ENCODE measurements at regions of chr17 and their contacts with region 1.

Region 1: DNA sequence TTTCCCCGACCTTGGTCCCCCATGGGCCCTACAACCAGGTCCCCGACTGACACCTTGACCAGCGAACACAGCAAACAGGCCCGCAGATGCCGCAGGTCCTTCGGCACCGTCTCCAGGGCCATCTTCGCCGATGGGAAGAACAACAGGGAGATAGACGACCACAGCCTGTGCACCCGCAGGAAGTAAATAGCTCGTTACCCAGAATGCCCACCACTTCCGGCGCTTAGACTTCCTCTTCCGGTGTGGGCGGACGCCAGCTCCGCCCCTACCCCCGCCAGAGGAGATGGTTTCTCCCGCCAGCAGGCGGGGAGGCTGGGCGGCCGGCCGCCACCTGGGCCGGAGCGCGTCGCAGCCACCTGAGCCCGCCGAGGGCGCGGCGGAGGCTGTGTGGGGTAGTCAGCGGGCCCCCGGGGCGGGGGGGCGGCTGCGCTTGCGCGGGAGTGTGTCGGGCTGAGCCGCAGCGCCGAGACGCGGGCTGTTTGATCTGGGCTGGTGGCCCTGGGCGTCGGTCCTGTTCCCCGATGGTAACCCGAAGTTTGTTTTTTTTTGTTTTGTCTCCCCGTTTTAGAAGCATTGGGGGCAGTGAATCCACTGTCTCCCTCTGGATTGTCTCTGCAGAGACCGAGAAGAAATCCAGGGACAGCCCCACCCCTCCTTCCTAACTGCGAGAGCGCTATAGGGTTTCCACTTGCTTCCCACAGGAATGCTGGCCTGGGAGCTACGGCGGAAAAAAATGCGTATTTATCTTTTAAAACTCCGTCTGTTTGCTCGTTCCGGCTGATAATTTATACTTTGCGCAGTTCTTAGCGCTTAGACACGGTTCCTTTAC is at the start of gene SUPT4H1:
- DNase-seq: peak; percentile 91
- H3K4me3 Mint-ChIP-seq: peak within 1 kb of the TSS; percentile 95
- H3K27ac Mint-ChIP-seq: peak within 1 kb of the TSS; percentile 92
- H3K4me1 Mint-ChIP-seq: peaks cover 58% of the 10 kb centered on the region
- H3K27me3 Mint-ChIP-seq: no peaks in the 10 kb centered on the region
- total RNA-seq, gene SUPT4H1: 66.1 to 69.0 TPM

Region 2: DNA sequence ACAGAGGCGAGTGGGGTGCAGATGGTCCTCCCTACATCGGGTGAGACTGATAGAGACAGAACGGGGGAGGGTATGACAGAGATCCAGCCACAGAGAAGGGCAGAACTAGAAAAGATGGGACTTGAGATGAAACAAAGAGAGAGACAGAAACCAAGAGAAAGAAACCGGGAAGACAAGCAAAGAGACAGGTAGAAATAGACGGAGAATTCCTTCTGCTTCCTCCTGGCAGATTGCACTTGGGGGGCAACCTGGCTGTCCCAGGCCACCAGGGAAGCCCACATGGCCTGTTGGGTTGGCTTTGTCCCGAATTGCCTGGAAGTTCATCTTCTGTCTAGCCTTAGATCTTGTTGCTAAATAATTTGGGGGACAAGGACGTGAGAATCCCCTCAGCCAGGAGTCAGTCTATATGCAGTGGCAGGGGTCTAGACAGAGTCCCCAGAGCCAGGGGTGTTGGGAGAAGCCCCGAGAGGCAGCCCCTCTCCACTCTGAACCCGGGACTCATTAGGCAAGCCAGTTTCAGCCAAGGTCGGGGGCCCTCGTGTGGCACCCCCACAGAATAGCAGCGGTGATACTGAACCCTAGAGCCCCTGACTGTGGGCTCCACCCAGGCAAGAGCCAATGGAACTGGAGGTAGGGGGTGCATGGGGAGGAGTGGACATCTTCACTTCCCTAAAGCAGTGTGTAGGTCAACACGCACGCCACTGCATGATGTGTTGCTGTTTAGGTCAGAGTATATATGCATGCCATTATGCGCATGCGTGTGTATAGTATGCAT is 23.0 kb before region 1 on chr17:
- CTCF ChIA-PET with region 1: interaction called, 11 read pairs
- POLR2A ChIA-PET with region 1: interaction called, 244 read pairs
- DNase-seq: peak; percentile 86
- H3K4me3 Mint-ChIP-seq: peak overlapping the region; percentile 93
- H3K27ac Mint-ChIP-seq: peak overlapping the region; percentile 99
- H3K4me1 Mint-ChIP-seq: peaks cover 36% of the 10 kb centered on the region
- H3K27me3 Mint-ChIP-seq: peaks cover 4% of the 10 kb centered on the region

Region 3: DNA sequence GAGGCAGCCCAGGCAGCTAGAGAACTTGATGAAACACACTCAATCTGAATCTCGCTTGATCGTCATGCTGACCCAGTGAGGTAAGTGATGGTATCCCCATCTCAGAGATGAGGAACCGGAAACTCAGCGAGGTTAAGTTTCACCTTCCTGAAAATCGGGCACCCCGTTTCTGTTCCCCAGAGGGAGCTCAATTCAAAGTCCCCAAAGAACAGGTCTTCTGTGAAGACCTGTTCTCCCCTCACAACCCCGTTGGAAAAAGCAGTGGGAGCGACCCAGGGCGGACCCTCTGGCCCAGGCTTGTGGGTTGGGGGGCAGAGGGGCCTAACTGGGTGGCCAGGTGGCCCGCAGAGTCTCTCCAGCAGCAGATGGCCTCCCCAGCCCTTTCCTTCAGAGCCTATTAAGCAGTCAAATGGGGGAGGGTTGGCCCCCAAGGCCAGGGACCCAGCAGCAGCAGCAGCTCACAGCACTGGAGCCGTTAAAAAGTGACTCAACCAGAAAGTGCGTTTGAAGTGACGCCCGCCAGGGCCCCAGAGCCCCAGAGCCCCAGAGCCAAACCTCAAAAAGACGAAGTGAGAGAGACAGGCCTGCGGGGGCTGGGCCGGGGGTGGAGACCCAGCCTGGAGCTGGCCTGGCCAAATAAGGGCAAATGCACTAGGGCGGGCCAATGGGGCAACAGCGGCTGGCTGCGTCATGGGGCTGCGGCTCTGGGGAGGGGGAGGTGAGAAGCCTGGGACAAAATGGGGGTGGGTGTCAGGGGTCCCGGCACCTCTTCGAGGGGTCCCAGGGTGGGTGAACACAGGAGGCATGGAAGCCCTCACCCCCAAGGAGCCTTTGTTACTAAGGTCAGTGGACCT is 14.4 kb before region 1 on chr17:
- CTCF ChIA-PET with region 1: interaction called, 26 read pairs
- POLR2A ChIA-PET with region 1: interaction called, 244 read pairs
- DNase-seq: peak; percentile 95
- H3K4me3 Mint-ChIP-seq: peak overlapping the region; percentile 93
- H3K27ac Mint-ChIP-seq: peak overlapping the region; percentile 99
- H3K4me1 Mint-ChIP-seq: peaks cover 36% of the 10 kb centered on the region
- H3K27me3 Mint-ChIP-seq: no peaks in the 10 kb centered on the region

Region 4: GRCh38 chr17:58364270-58364942 is 12.2 kb after region 1 on chr17:
- CTCF ChIA-PET with region 1: interaction called, 20 read pairs
- POLR2A ChIA-PET with region 1: interaction called, 3 read pairs
- DNase-seq: no peak
- H3K4me3 Mint-ChIP-seq: no peak overlapping the region
- H3K27ac Mint-ChIP-seq: no peak overlapping the region
- H3K4me1 Mint-ChIP-seq: peaks cover 5% of the 10 kb centered on the region
- H3K27me3 Mint-ChIP-seq: no peaks in the 10 kb centered on the region

Region 5: GRCh38 chr17:58417300-58418092 is 65.3 kb after region 1 on chr17 and contains the start of gene RNF43:
- CTCF ChIA-PET with region 1: interaction called, 8 read pairs
- POLR2A ChIA-PET with region 1: interaction called, 16 read pairs
- DNase-seq: peak; percentile 91
- H3K4me3 Mint-ChIP-seq: no peak within 1 kb of the TSS
- H3K27ac Mint-ChIP-seq: peak within 1 kb of the TSS; percentile 50
- H3K4me1 Mint-ChIP-seq: peaks cover 26% of the 10 kb centered on the region
- H3K27me3 Mint-ChIP-seq: no peaks in the 10 kb centered on the region
- total RNA-seq, gene RNF43: 0.07 to 0.12 TPM

Measured in activated CD4-positive, alpha-beta T cell treated with anti-CD3 and anti-CD28 coated beads, Interleukin-2, amount 10 ng/mL, durations not matched to agents 7 days and 5 days (primary cell).